GM18951 (cell line): ENCODE measurements at regions of chr1 and their contacts with region 1.

Region 1: DNA sequence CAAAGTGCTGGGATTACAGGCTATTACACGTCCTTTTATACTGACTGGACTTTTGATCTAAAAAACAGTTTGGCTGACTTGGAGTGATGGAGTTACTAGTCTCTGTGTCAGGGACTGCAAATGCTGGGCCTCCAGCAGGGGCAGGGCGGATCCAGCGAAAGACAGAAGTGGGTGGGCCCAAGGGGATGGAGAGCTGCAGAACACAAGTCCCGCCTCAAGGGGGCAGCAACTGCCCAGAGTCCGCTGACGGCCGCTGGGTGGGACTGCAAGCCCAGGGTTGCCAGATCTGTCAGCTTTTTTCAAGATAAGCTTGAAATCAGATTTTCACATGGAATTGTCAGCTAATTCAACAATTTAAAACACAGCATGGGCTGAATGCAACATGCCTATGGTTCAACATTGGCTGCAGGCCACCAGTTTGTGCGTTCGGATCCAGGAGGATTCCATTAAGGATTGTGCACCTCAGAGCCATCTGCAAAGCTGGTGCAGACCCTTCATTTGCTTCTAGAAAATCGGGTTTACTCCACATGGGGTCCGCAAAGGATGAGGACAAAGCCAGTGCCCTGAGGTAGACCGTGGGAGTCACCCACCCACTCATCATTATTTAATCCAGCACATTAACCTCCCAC is 10.7 kb downstream of the STMN1 start:
- POLR2A ChIP-seq: no peak

Region 2: DNA sequence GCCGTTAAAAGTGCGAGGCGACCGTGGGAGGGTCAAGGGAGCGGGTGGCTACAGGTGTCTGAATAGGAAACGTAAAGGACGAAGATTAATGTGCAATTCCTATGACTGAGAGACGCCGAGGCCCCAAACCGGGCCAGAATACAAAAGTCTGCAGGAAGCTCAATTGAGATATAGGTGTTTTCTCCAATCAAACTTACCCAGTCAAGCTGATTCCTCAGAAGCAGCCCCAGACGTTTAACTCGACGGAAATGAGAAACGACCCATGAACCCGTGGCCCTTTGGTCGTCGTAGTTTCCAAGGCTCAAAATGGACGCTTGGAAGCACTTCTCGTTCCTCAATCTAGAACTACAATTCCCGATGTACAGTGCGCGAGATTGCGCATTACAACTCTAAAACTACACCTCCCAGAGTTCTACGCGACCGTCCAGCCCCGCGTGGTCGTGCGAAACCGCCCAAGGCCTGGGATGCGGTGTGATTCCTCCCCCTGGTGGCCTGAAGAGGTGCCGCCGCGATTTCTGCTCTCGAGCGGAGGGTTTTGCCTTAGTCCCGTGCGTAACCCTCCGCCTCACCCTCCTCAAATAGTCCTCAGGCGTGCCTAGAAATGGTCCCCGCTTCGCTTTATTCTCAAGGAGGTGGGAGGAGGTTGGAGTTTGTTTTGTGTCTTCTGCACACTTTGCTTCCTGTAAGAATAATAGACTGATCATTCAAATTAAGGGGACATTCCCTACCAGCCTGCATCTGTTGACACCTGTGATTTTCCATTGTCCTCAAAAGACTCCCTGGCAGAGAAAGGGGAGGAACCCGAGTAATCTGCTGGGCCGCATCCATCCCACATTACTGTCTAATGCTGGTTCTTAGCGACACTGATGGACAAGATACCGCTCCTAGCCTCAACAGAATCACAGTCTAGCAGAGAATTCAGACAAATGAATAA is 102.6 kb after region 1 on chr1 and contains the start of gene PAFAH2:
- in situ Hi-C with region 1: loop called (anchors 5 kb)
- POLR2A ChIP-seq: peak; percentile 51